Right ventricle myocardium superior (tissue), 1 donor: ENCODE measurements at regions of chr12 and their contacts with region 1.

Region 1: GRCh38 chr12:123223241-123223668 is 9.7 kb downstream of the MPHOSPH9 start:
- DNase-seq: no peak
- ATAC-seq: no peak

Region 2: GRCh38 chr12:123131879-123132452 is 91.3 kb before region 1 on chr12:
- intact Hi-C with region 1: no loop called
- DNase-seq: peak; percentile 52
- ATAC-seq: peak; percentile 59

Region 3: GRCh38 chr12:123163227-123163626 is 60.0 kb before region 1 on chr12:
- intact Hi-C with region 1: loop called (anchors 10 kb)
- DNase-seq: no peak
- ATAC-seq: no peak